ENCODE measurements at regions of chr12 and their contacts with region 1.

Region 1: GRCh38 chr12:107131832-107132616 is 38.7 kb upstream of the CRY1 start:
- DNase-seq: peak; percentile 52
- H3K4me3 ChIP-seq: peak overlapping the region in 1 of 2 experiments; percentile 28; a peak in 1 of 4 replicates
- H3K27ac ChIP-seq: peak overlapping the region in 1 of 2 experiments; percentile 76; a peak in 1 of 4 replicates
- H3K4me1 ChIP-seq: peaks cover 0 to 19% of the 10 kb centered on the region in 2 experiments; a peak in 2 of 4 replicates
- H3K27me3 ChIP-seq: no peaks in the 10 kb centered on the region
- CTCF ChIP-seq: peak; percentile 94
- EP300 ChIP-seq: no peak
- RAD21 ChIP-seq: peak; percentile 97

Region 2: DNA sequence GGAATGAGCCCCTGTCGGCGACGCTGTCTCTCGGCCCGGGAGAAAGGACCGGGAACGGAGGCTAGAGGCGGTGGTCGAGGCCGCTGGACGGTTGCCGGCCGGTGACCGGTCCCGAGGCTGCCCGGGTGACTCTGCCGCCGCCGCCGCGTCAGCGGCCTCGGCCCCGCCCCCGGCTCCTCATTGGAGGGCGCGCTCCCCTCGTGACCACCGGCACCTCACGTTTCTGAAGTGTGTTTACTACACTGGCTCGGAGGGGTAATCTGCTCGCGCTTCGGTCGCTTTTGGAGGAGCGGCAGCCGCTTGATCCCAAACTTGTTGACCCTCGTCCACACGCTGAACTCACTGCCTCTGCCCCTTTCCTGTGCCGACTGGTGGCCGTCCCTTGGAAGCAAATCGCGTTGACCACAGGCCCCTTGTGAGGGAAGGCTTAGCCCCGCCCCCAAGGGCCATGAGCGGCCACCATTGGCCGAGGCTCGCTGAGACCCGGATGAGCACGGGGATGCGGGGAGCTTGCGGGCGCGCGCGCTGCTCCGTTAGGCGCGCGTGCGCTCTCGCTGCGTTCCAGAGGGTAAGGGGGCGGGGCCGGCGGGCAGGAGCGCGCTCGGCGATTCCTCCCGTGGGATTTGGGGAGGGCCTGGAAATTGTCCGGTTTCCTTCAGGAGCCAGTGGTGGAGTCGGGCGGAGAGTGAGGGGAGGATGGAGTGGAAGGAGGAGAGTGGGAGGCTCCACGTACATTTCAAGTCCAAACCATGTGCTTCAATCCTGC is 38.4 kb before region 1 on chr12 and contains the start of gene CRY1:
- CTCF ChIA-PET with region 1: interaction called, 35 read pairs
- POLR2A ChIA-PET with region 1: no interaction called
- DNase-seq: peak; percentile 95
- H3K4me3 ChIP-seq: peak within 1 kb of the TSS; percentile 80 to 87
- H3K27ac ChIP-seq: peak within 1 kb of the TSS; percentile 88 to 96
- H3K4me1 ChIP-seq: peaks cover 0 to 15% of the 10 kb centered on the region in 2 experiments; a peak in 2 of 4 replicates
- H3K27me3 ChIP-seq: no peaks in the 10 kb centered on the region
- CTCF ChIP-seq: no peak
- EP300 ChIP-seq: no peak
- RAD21 ChIP-seq: no peak
- polyA plus RNA-seq, gene CRY1: 4.9 and 6.7 TPM in 2 replicates

Region 3: GRCh38 chr12:107145397-107145796 is 13.4 kb after region 1 on chr12:
- CTCF ChIA-PET with region 1: interaction called, 33 read pairs
- POLR2A ChIA-PET with region 1: no interaction called
- DNase-seq: no peak
- H3K4me3 ChIP-seq: no peak overlapping the region
- H3K27ac ChIP-seq: no peak overlapping the region
- H3K4me1 ChIP-seq: no peaks in the 10 kb centered on the region
- H3K27me3 ChIP-seq: no peaks in the 10 kb centered on the region
- CTCF ChIP-seq: no peak
- EP300 ChIP-seq: no peak
- RAD21 ChIP-seq: no peak

Region 4: GRCh38 chr12:107372229-107372658 is 240.2 kb after region 1 on chr12:
- CTCF ChIA-PET with region 1: interaction called, 17 read pairs
- POLR2A ChIA-PET with region 1: no interaction called
- DNase-seq: no peak
- H3K4me3 ChIP-seq: no peak overlapping the region
- H3K27ac ChIP-seq: peak overlapping the region in 1 of 2 experiments; percentile 19; a peak in 1 of 4 replicates
- H3K4me1 ChIP-seq: peaks cover 5 to 39% of the 10 kb centered on the region in 2 experiments; a peak in 3 of 4 replicates
- H3K27me3 ChIP-seq: no peaks in the 10 kb centered on the region
- CTCF ChIP-seq: no peak
- EP300 ChIP-seq: no peak
- RAD21 ChIP-seq: no peak

Region 5: DNA sequence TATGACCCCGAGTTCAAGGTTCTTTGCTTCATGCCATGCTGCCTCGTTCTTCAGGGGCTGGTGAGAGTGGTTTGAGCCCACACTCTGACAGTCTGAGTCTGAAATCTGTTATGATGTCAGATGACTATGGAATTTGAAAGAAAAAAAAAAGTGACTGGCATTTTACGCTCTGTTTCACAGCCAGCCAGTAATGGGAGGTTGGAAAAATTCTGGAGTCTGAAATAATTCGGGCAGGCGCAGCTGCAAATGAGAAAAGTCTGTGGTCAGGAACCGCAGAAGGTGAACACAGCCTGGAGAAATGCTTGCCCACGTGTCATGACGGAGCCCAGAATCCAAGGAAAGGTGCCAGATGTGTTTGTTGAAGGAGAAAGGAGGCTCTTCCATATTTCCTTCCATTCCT is 283.8 kb after region 1 on chr12:
- CTCF ChIA-PET with region 1: interaction called, 12 read pairs
- POLR2A ChIA-PET with region 1: no interaction called
- DNase-seq: no peak
- H3K4me3 ChIP-seq: no peak overlapping the region
- H3K27ac ChIP-seq: no peak overlapping the region
- H3K4me1 ChIP-seq: peaks cover 4% of the 10 kb centered on the region in 2 experiments; a peak in 1 of 4 replicates
- H3K27me3 ChIP-seq: no peaks in the 10 kb centered on the region
- CTCF ChIP-seq: no peak
- EP300 ChIP-seq: no peak
- RAD21 ChIP-seq: no peak

Region 6: DNA sequence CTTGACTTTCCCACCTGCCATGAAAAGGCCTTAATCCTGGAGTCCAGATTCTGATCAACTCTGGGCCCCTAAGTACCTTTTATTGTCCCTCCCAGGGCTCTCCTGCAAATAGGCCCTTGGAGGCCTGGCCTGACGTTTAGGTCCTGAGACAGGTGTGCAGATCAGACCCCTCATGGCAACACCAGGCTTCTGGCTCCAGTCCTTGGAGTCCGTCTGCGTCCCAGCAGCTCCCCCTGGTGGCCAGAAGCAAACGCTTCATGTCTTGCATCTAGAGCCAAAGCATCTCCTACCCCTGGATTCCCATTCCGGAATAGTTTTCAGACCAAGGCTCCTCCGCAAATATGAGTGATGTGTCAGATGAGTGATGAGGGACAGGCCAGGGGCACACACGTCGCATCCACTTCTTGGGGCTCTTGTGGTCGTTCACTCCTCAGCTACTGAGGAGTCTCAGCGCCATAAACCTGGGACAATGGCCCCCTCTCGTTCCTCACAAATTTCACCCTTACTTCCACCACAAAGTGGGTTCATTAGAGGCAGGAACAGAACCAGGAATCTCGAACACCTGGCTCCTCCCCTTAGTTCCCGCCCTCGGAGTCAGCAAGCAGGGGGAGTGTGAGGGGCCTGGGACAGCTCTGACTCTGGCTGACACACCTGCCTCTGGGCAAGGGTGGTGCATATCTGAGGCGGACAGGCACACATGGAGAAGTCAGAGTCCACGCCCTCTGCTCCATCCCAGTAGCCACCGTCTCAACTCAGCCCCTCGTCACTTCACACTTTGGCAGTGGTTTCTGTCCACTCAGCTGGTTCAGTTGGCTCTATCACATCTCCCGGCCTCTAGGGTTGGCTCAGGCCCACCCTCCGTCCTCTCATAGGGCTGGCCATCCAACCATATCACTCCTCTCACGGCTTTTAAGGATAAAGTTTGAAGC is 475.7 kb after region 1 on chr12:
- CTCF ChIA-PET with region 1: interaction called, 361 read pairs
- POLR2A ChIA-PET with region 1: no interaction called
- DNase-seq: peak; percentile 81
- H3K4me3 ChIP-seq: peak overlapping the region in 1 of 2 experiments; percentile 34; a peak in 1 of 4 replicates
- H3K27ac ChIP-seq: no peak overlapping the region
- H3K4me1 ChIP-seq: peaks cover 0 to 5% of the 10 kb centered on the region in 2 experiments; a peak in 1 of 4 replicates
- H3K27me3 ChIP-seq: no peaks in the 10 kb centered on the region
- CTCF ChIP-seq: peak; percentile 93
- EP300 ChIP-seq: no peak
- RAD21 ChIP-seq: peak; percentile 95

Region 7: DNA sequence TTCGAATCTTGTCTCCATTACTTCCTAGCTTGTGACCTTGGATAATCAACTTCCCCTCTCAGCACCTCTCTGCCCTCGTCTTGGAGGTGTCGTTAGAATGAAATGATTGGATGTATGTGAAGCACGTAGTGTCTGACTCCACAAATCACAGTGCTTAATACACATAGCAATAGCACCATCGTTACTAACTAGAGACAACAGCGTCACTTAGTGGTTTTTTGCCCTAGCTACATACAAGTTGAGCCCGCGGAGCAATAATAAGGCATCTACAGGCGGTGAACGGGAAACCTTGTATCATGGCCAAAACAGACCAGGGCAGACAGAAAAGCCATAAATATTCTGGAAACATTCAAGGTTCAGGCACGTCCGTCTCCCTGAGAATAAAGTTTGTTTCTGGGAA is 797.4 kb after region 1 on chr12:
- CTCF ChIA-PET with region 1: no interaction called
- POLR2A ChIA-PET with region 1: no interaction called
- DNase-seq: peak; percentile 42
- H3K4me3 ChIP-seq: no peak overlapping the region
- H3K27ac ChIP-seq: no peak overlapping the region
- H3K4me1 ChIP-seq: no peaks in the 10 kb centered on the region
- H3K27me3 ChIP-seq: no peaks in the 10 kb centered on the region
- CTCF ChIP-seq: peak; percentile 33
- EP300 ChIP-seq: no peak
- RAD21 ChIP-seq: peak; percentile 64